ENCODE measurements at regions of chr4 and their contacts with region 1.

Region 1: GRCh38 chr4:6986781-6987587 is 56.2 kb upstream of the TADA2B start:
- DNase-seq: peak; percentile 95
- H3K4me3 ChIP-seq: peak overlapping the region; percentile 57 to 89 (median 85)
- H3K27ac ChIP-seq: peak overlapping the region; percentile 81 to 92 (median 86)
- H3K4me1 ChIP-seq: peaks cover 25 to 43% of the 10 kb centered on the region in 2 donors
- H3K27me3 ChIP-seq: no peaks in the 10 kb centered on the region
- CTCF ChIP-seq: peak in 2 of 6 experiments; percentile 7 to 21
- POLR2A ChIP-seq: peak in 1 of 2 donors; percentile 77

Region 2: DNA sequence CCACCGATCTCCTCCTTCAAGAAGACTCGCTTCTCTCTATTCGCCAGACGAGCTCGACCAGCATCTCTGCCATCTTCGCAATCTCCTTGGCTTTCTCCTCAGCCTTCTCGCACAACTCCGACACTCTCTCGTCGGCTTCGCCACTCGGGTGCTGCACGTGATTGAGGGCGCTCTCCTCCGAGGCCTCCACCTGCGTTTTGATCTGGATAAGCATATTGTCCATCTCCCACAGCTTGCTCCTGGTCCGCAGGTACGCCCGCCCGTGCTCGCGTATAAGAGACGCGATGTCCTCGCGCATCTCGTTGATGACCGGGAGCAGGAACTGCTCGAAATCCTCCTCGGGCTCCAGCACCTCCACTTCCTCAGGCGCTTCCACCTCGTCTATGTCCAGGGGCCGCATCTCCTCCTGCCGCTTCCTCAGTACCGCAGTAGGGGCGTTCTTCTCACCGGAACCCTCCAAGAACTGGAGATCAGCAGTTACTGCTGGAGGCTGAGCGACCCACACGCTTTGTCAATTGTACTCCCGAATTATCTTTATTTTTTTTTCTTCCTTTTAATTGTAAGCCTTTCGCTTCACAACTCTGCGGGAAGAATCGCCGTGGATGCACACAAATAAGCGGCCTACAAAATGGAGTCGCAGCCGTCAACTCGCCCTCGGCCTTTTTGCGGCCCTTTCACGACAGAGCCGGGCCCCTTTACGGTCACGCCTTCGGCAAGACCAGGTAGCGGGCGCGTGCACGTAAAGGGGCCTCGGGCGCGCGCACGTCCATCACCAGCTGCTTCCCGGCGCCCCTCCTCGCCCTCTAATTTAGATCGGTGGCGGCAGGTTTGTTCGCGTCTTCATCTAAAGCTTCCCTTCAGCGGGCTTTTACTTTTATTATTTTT is 277.5 kb before region 1 on chr4 and contains the start of gene MRFAP1L1:
- intact Hi-C with region 1: loop called (anchors 10 kb)
- DNase-seq: peak; percentile 98
- H3K4me3 ChIP-seq: peak within 1 kb of the TSS; percentile 65 to 87 (median 86)
- H3K27ac ChIP-seq: peak within 1 kb of the TSS; percentile 70 to 79 (median 76)
- H3K4me1 ChIP-seq: peaks cover 31 to 33% of the 10 kb centered on the region in 2 donors
- H3K27me3 ChIP-seq: no peaks in the 10 kb centered on the region
- CTCF ChIP-seq: peak in 2 of 6 experiments; percentile 14 to 15
- POLR2A ChIP-seq: peak in 1 of 2 donors; percentile 67
- total RNA-seq, gene MRFAP1L1: 70.5 to 93.9 (median 76.2) TPM

Region 3: GRCh38 chr4:6909073-6909965 is 77.7 kb before region 1 on chr4 and contains the start of gene TBC1D14:
- intact Hi-C with region 1: loop called (anchors 5 kb)
- DNase-seq: peak; percentile 89 to 90
- H3K4me3 ChIP-seq: peak within 1 kb of the TSS; percentile 31 to 80 (median 59)
- H3K27ac ChIP-seq: peak within 1 kb of the TSS; percentile 96 to 98 (median 98)
- H3K4me1 ChIP-seq: peaks cover 9 to 35% of the 10 kb centered on the region in 2 donors
- H3K27me3 ChIP-seq: no peaks in the 10 kb centered on the region
- CTCF ChIP-seq: peak in 2 of 6 experiments; percentile 11 to 35
- POLR2A ChIP-seq: peak in 1 of 2 donors; percentile 61
- total RNA-seq, gene TBC1D14: 39.8 to 47.0 (median 46.0) TPM

Region 4: GRCh38 chr4:7042697-7043464 is 55.9 kb after region 1 on chr4 and contains the start of gene TADA2B:
- intact Hi-C with region 1: loop called (anchors 5 kb)
- DNase-seq: peak; percentile 98
- H3K4me3 ChIP-seq: peak within 1 kb of the TSS; percentile 60 to 96 (median 88)
- H3K27ac ChIP-seq: peak within 1 kb of the TSS; percentile 59 to 78 (median 76)
- H3K4me1 ChIP-seq: peaks cover 32 to 38% of the 10 kb centered on the region in 2 donors
- H3K27me3 ChIP-seq: no peaks in the 10 kb centered on the region
- CTCF ChIP-seq: peak in 3 of 6 experiments; percentile 56 to 83 (median 69)
- POLR2A ChIP-seq: peak in 1 of 2 donors; percentile 45
- total RNA-seq, gene TADA2B: 17.9 to 34.1 (median 26.6) TPM

Region 5: GRCh38 chr4:7058792-7059191 is 71.8 kb after region 1 on chr4:
- intact Hi-C with region 1: no loop called
- DNase-seq: no peak
- H3K4me3 ChIP-seq: no peak overlapping the region
- H3K27ac ChIP-seq: no peak overlapping the region
- H3K4me1 ChIP-seq: no peaks in the 10 kb centered on the region
- H3K27me3 ChIP-seq: no peaks in the 10 kb centered on the region
- CTCF ChIP-seq: no peak
- POLR2A ChIP-seq: no peak